ENCODE measurements at regions of chr5 and their contacts with region 1.

Region 1: GRCh38 chr5:16952968-16953671 is 17.0 kb upstream of the MYO10 start:
- DNase-seq: no peak
- H3K4me3 ChIP-seq: no peak overlapping the region
- H3K27ac ChIP-seq: no peak overlapping the region
- H3K4me1 ChIP-seq: no peaks in the 10 kb centered on the region
- H3K27me3 ChIP-seq: no peaks in the 10 kb centered on the region
- CTCF ChIP-seq: no peak

Region 2: GRCh38 chr5:17014686-17015085 is 61.6 kb after region 1 on chr5:
- CTCF ChIA-PET with region 1: no interaction called
- POLR2A ChIA-PET with region 1: interaction called, 13 read pairs
- intact Hi-C with region 1: no loop called
- DNase-seq: no peak
- H3K4me3 ChIP-seq: no peak overlapping the region
- H3K27ac ChIP-seq: no peak overlapping the region
- H3K4me1 ChIP-seq: no peaks in the 10 kb centered on the region
- H3K27me3 ChIP-seq: no peaks in the 10 kb centered on the region
- CTCF ChIP-seq: no peak

Measured in A673 (cell line).